ENCODE measurements at regions of chr20 and their contacts with region 1.

Region 1: DNA sequence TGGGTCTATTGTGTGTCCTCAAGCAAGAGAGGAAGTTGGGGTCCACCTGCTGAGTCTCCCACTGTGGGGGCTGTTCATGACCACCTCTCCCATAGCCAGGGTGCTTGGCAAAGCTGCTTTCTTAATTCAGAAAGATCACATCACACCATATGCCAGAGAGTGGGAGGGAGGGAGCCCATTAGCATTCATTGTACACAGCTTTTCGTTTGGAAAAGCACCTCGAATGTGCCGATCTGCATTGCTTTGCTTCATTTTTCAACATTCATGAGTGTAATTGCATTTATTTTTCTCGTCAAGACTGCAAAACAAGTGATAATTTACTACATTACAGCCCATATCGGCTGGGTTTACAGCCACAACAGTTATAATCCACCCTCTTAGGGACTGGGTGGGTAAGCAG is 327.3 kb downstream of the PTPRT start:
- DNase-seq: no peak
- ATAC-seq: no peak
- H3K4me3 ChIP-seq: no peak overlapping the region
- H3K27ac ChIP-seq: no peak overlapping the region
- H3K4me1 ChIP-seq: no peaks in the 10 kb centered on the region
- H3K27me3 ChIP-seq: no peaks in the 10 kb centered on the region
- CTCF ChIP-seq: no peak

Region 2: GRCh38 chr20:42319252-42320013 is 543.0 kb before region 1 on chr20:
- CTCF ChIA-PET with region 1: no interaction called
- POLR2A ChIA-PET with region 1: no interaction called
- in situ Hi-C with region 1: no loop called
- intact Hi-C with region 1: no loop called
- DNase-seq: no peak
- ATAC-seq: no peak
- H3K4me3 ChIP-seq: no peak overlapping the region
- H3K27ac ChIP-seq: no peak overlapping the region
- H3K4me1 ChIP-seq: no peaks in the 10 kb centered on the region
- H3K27me3 ChIP-seq: no peaks in the 10 kb centered on the region
- CTCF ChIP-seq: no peak

Region 3: DNA sequence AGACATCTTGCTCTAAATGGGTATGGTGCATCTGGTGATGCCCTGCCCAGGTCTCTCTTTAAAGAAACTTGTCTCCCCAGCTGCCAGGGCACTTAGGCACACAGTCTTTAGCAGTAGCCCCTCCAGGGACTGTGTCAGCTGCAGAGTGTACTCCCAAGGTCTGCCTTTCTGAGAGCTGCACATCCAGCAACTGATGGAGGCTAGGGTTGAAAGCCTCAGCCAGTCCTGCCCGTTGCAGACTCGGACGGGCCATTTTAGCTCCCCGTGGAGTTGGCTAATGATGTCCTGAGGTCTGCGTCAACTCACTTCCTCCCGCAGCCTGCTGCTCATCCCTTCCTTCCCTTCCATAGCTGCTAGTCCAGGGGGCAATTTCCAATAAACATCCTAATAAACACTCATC is 54.6 kb before region 1 on chr20:
- CTCF ChIA-PET with region 1: no interaction called
- POLR2A ChIA-PET with region 1: no interaction called
- in situ Hi-C with region 1: no loop called
- intact Hi-C with region 1: loop called (anchors 10 kb)
- DNase-seq: no peak
- ATAC-seq: no peak
- H3K4me3 ChIP-seq: no peak overlapping the region
- H3K27ac ChIP-seq: no peak overlapping the region
- H3K4me1 ChIP-seq: no peaks in the 10 kb centered on the region
- H3K27me3 ChIP-seq: no peaks in the 10 kb centered on the region
- CTCF ChIP-seq: no peak